CD8-positive, alpha-beta T cell (primary cell): ENCODE measurements at regions of chr17 and their contacts with region 1.

Region 1: DNA sequence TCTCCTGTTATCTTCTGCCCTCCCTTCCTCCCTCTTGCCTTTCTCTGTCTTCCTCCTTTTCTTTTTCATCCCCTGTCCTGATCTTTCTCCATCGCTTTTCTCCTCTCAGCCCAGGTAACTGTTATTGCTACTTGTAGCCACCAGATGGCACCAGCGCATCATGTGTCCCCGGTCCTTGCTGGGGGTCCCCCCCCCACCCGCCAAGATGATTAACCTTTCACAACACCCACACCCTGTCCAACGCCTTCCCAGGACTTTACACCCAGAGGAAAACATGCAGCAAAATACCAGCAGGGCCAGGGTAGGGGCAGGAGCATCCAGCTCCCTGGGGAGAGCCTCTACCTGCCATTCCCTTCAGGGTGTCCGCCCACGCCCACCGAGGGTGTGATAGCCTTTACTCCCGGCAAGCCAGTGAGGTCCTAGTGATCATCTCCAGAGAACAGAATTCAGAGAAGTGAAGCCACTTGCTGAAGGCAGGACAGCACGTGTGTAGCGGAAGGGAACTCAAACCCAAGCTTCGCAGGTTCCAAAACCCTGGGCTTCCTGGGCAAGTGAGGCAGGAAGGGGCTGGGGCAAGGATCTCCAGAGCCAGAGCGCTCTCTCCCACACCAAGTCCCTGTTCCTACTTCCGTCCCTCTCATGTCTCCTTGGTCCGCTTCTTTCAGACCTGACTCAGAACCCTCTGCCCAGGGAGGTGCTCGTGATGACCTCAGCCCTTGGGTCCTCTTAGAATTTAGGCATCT is 13.5 kb upstream of the TAC4 start:
- DNase-seq: peak; percentile 14 to 81 (median 66)
- ATAC-seq: peak; percentile 90
- H3K4me3 ChIP-seq: no peak overlapping the region
- H3K4me3 Mint-ChIP-seq: no peak overlapping the region
- H3K27ac ChIP-seq: no peak overlapping the region
- H3K27ac Mint-ChIP-seq: no peak overlapping the region
- H3K4me1 ChIP-seq: no peaks in the 10 kb centered on the region
- H3K4me1 Mint-ChIP-seq: peaks cover 4% of the 10 kb centered on the region
- H3K27me3 ChIP-seq: peaks cover 0 to 3% of the 10 kb centered on the region in 2 experiments
- H3K27me3 Mint-ChIP-seq: peaks cover 11% of the 10 kb centered on the region
- CTCF ChIP-seq: peak; percentile 93

Region 2: DNA sequence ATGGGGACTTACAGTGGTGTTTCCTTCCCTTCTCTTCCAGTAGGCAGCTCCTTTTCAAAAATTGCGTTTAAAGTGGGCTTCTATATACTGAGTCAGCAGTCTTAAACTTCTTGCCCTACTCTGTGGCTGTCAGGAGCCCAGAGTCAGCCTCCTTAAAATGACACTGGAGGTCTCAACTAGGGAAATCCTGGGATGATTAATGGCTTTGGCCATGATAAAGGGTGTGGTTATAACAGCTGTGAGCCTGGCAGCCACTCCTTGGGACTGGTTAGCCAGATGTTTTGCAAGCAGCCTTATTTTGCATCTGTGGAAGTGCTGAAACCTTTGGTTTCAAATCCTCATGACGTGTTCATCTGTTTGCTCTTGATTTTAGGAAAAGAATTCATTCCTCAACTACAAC is 38.5 kb before region 1 on chr17:
- CTCF ChIA-PET with region 1: no interaction called
- POLR2A ChIA-PET with region 1: no interaction called
- intact Hi-C with region 1: no loop called
- DNase-seq: no peak
- ATAC-seq: no peak
- H3K4me3 ChIP-seq: no peak overlapping the region
- H3K4me3 Mint-ChIP-seq: no peak overlapping the region
- H3K27ac ChIP-seq: no peak overlapping the region
- H3K27ac Mint-ChIP-seq: peak overlapping the region; percentile 37
- H3K4me1 ChIP-seq: peaks cover 42% of the 10 kb centered on the region
- H3K4me1 Mint-ChIP-seq: peaks cover 44% of the 10 kb centered on the region
- H3K27me3 ChIP-seq: no peaks in the 10 kb centered on the region
- H3K27me3 Mint-ChIP-seq: no peaks in the 10 kb centered on the region
- CTCF ChIP-seq: no peak

Region 3: DNA sequence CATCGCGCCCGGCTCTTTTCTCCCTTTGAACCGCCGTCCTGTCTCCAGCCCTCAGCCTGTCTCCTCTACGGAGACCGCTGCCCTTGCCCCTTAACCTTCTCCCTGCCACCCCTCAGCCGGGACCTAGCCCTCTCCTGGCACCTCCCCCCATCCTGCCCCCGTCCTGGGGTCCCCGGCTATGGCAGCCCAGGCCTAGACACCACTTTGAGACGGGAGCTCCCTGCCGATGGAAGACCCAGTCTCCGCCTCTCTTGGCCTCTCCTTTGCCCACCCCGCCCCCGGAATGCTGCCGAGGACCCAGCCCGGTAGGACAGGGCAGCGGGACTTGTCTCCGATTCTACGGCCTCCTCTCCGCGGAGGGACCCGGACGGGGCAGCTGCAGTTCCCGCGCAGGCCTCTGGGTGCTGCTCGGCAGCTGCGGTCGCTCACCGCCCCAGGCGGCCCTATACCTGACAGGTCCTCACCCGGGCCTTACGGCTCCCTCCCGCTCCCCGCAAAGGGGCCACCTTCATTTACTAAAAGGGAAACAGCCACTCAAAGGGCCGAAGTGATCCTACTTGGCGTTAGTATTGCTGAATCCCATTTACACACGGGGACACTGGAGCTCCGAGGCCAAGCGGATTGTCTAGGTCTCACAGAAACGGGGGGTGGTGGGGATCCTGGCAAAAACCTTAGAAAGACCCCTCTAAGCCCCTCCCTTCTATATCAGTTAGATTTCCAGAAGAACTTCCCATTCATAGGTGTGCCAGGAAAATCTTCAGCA is 19.2 kb after region 1 on chr17:
- CTCF ChIA-PET with region 1: interaction called, 9 read pairs
- POLR2A ChIA-PET with region 1: no interaction called
- intact Hi-C with region 1: loop called in 1 of 2 experiments (anchors 1 kb)
- DNase-seq: peak; percentile 55 to 82 (median 72)
- ATAC-seq: peak; percentile 98
- H3K4me3 ChIP-seq: peak overlapping the region in 1 of 2 experiments; percentile 17
- H3K4me3 Mint-ChIP-seq: peak overlapping the region; percentile 15
- H3K27ac ChIP-seq: no peak overlapping the region
- H3K27ac Mint-ChIP-seq: no peak overlapping the region
- H3K4me1 ChIP-seq: peaks cover 8% of the 10 kb centered on the region
- H3K4me1 Mint-ChIP-seq: peaks cover 7% of the 10 kb centered on the region
- H3K27me3 ChIP-seq: peaks cover 12 to 17% of the 10 kb centered on the region in 2 experiments
- H3K27me3 Mint-ChIP-seq: peaks cover 35% of the 10 kb centered on the region
- CTCF ChIP-seq: peak; percentile 94

Region 4: GRCh38 chr17:49944273-49944890 is 83.1 kb after region 1 on chr17:
- CTCF ChIA-PET with region 1: no interaction called
- POLR2A ChIA-PET with region 1: no interaction called
- intact Hi-C with region 1: no loop called
- DNase-seq: no peak
- ATAC-seq: no peak
- H3K4me3 ChIP-seq: no peak overlapping the region
- H3K4me3 Mint-ChIP-seq: no peak overlapping the region
- H3K27ac ChIP-seq: no peak overlapping the region
- H3K27ac Mint-ChIP-seq: no peak overlapping the region
- H3K4me1 ChIP-seq: no peaks in the 10 kb centered on the region
- H3K4me1 Mint-ChIP-seq: no peaks in the 10 kb centered on the region
- H3K27me3 ChIP-seq: peaks cover 0 to 2% of the 10 kb centered on the region in 2 experiments
- H3K27me3 Mint-ChIP-seq: peaks cover 34% of the 10 kb centered on the region
- CTCF ChIP-seq: no peak